ENCODE measurements at regions of chr6 and their contacts with region 1.

Region 1: GRCh38 chr6:137165375-137166246 is 7.8 kb downstream of the IL22RA2 start:
- DNase-seq: peak; percentile 85
- ATAC-seq: peak; percentile 86
- H3K4me3 ChIP-seq: no peak overlapping the region
- H3K27ac ChIP-seq: peak overlapping the region; percentile 93
- H3K4me1 ChIP-seq: peaks cover 37% of the 10 kb centered on the region
- H3K27me3 ChIP-seq: no peaks in the 10 kb centered on the region
- CTCF ChIP-seq: peak; percentile 57 to 81 (median 58)
- EP300 ChIP-seq: 0 out of 4 replicates have a peak, but pooled peaks of 1 of the 2 experiments have one; percentile 47
- POLR2A ChIP-seq: no peak
- RAD21 ChIP-seq: peak; percentile 95

Region 2: GRCh38 chr6:137076277-137077068 is 89.1 kb before region 1 on chr6:
- CTCF ChIA-PET with region 1: interaction called, 42 read pairs
- POLR2A ChIA-PET with region 1: interaction called, 5 read pairs
- RAD21 ChIA-PET with region 1: interaction called, 70 read pairs
- SMC1A ChIA-PET with region 1: interaction called, 43 read pairs
- in situ Hi-C with region 1: no loop called
- intact Hi-C with region 1: loop called (anchors 1 kb)
- DNase-seq: no peak
- ATAC-seq: peak; percentile 100
- H3K4me3 ChIP-seq: no peak overlapping the region
- H3K27ac ChIP-seq: peak overlapping the region; percentile 42
- H3K4me1 ChIP-seq: peaks cover 7% of the 10 kb centered on the region
- H3K27me3 ChIP-seq: no peaks in the 10 kb centered on the region
- CTCF ChIP-seq: peak; percentile 90 to 96 (median 93); a peak in 5 of 6 replicates
- EP300 ChIP-seq: no peak
- POLR2A ChIP-seq: no peak
- RAD21 ChIP-seq: peak; percentile 96

Region 3: GRCh38 chr6:137112067-137112355 is 53.6 kb before region 1 on chr6:
- CTCF ChIA-PET with region 1: interaction called, 46 read pairs
- POLR2A ChIA-PET with region 1: interaction called, 38 read pairs
- RAD21 ChIA-PET with region 1: interaction called, 81 read pairs
- SMC1A ChIA-PET with region 1: interaction called, 130 read pairs
- in situ Hi-C with region 1: no loop called
- intact Hi-C with region 1: no loop called
- DNase-seq: no peak
- ATAC-seq: no peak; the same call in 2 of the 3 replicates
- H3K4me3 ChIP-seq: no peak overlapping the region
- H3K27ac ChIP-seq: no peak overlapping the region
- H3K4me1 ChIP-seq: peaks cover 14% of the 10 kb centered on the region
- H3K27me3 ChIP-seq: no peaks in the 10 kb centered on the region
- CTCF ChIP-seq: no peak
- EP300 ChIP-seq: no peak
- POLR2A ChIP-seq: no peak
- RAD21 ChIP-seq: no peak

Region 4: GRCh38 chr6:137177611-137178348 is 12.2 kb after region 1 on chr6:
- CTCF ChIA-PET with region 1: interaction called, 23 read pairs
- POLR2A ChIA-PET with region 1: interaction called, 5 read pairs
- RAD21 ChIA-PET with region 1: interaction called, 15 read pairs
- SMC1A ChIA-PET with region 1: interaction called, 20 read pairs
- in situ Hi-C with region 1: no loop called
- intact Hi-C with region 1: no loop called
- DNase-seq: no peak
- ATAC-seq: no peak
- H3K4me3 ChIP-seq: no peak overlapping the region
- H3K27ac ChIP-seq: no peak overlapping the region
- H3K4me1 ChIP-seq: peaks cover 19% of the 10 kb centered on the region
- H3K27me3 ChIP-seq: no peaks in the 10 kb centered on the region
- CTCF ChIP-seq: no peak
- EP300 ChIP-seq: no peak
- POLR2A ChIP-seq: no peak
- RAD21 ChIP-seq: no peak

Region 5: DNA sequence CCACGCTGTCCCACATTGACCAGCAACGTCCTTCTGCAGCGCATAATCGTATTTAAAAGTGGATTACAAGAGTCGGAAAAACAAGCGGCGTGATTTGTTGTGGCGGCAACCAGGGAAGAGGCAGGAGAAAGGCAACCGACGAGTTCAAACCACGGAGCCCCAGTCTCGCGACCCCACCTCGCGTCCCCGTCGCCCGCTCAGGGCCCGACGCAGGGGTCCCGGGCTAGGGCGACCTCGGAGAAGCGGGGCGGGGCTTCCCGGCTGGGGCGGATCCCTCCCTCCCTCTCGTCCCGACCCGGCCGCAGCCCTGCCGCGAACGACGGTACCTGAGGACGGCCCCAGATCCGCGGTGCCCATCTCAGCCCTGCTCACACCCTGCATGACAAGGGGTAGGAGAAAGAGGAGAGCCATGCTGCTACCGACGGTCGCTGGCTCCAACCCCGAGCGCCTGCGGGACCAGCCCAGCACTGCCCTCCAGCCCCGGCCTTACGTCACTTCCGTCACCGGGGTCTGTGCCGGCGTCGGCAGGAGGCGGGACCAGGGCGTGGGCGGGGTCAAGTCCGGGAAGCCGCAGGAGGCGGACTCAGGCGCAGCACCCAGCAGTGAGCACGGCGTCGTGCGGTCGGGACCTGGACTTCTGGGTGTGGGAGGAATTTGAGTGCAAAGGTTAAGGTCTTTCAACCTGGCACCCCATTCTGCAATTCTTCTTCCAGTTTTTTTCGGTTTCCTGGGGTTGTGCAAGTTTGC is 53.5 kb after region 1 on chr6 and contains the start of gene IFNGR1:
- CTCF ChIA-PET with region 1: interaction called, 14 read pairs
- POLR2A ChIA-PET with region 1: interaction called, 18 read pairs
- RAD21 ChIA-PET with region 1: interaction called, 68 read pairs
- SMC1A ChIA-PET with region 1: interaction called, 70 read pairs
- in situ Hi-C with region 1: no loop called
- intact Hi-C with region 1: loop called (anchors 2 kb)
- DNase-seq: peak; percentile 81
- ATAC-seq: peak; percentile 79
- H3K4me3 ChIP-seq: peak within 1 kb of the TSS; percentile 91
- H3K27ac ChIP-seq: peak within 1 kb of the TSS; percentile 94
- H3K4me1 ChIP-seq: peaks cover 15% of the 10 kb centered on the region
- H3K27me3 ChIP-seq: no peaks in the 10 kb centered on the region
- CTCF ChIP-seq: no peak
- EP300 ChIP-seq: no peak
- POLR2A ChIP-seq: peak; percentile 94
- RAD21 ChIP-seq: no peak
- polyA plus RNA-seq, gene IFNGR1: 182 to 296 TPM

Region 6: GRCh38 chr6:137261393-137262160 is 96.0 kb after region 1 on chr6:
- CTCF ChIA-PET with region 1: interaction called, 5 read pairs
- POLR2A ChIA-PET with region 1: interaction called, 6 read pairs
- RAD21 ChIA-PET with region 1: interaction called, 25 read pairs
- SMC1A ChIA-PET with region 1: interaction called, 20 read pairs
- in situ Hi-C with region 1: no loop called
- intact Hi-C with region 1: loop called (anchors 5 kb)
- DNase-seq: peak; percentile 72
- ATAC-seq: peak; percentile 77
- H3K4me3 ChIP-seq: no peak overlapping the region; the same call in 1 of the 2 replicates
- H3K27ac ChIP-seq: peak overlapping the region; percentile 54
- H3K4me1 ChIP-seq: peaks cover 13% of the 10 kb centered on the region
- H3K27me3 ChIP-seq: no peaks in the 10 kb centered on the region
- CTCF ChIP-seq: no peak
- EP300 ChIP-seq: peak; percentile 52 to 84; a peak in 3 of 4 replicates
- POLR2A ChIP-seq: no peak
- RAD21 ChIP-seq: no peak

Region 7: GRCh38 chr6:137641474-137642077 is 476.0 kb after region 1 on chr6:
- CTCF ChIA-PET with region 1: no interaction called
- POLR2A ChIA-PET with region 1: interaction called, 3 read pairs
- RAD21 ChIA-PET with region 1: interaction called, 6 read pairs
- SMC1A ChIA-PET with region 1: interaction called, 8 read pairs
- in situ Hi-C with region 1: no loop called
- intact Hi-C with region 1: loop called (anchors 5 kb)
- DNase-seq: no peak
- ATAC-seq: peak; percentile 79
- H3K4me3 ChIP-seq: no peak overlapping the region
- H3K27ac ChIP-seq: no peak overlapping the region
- H3K4me1 ChIP-seq: peaks cover 21% of the 10 kb centered on the region
- H3K27me3 ChIP-seq: no peaks in the 10 kb centered on the region
- CTCF ChIP-seq: peak; percentile 53 to 83 (median 65)
- EP300 ChIP-seq: no peak
- POLR2A ChIP-seq: no peak
- RAD21 ChIP-seq: peak; percentile 91